ENCODE measurements at regions of chr3 and their contacts with region 1.

Region 1: GRCh38 chr3:44913868-44914468 is 39.6 kb downstream of the TGM4 start:
- DNase-seq: peak; percentile 77
- CTCF ChIP-seq: peak; percentile 89

Region 2: DNA sequence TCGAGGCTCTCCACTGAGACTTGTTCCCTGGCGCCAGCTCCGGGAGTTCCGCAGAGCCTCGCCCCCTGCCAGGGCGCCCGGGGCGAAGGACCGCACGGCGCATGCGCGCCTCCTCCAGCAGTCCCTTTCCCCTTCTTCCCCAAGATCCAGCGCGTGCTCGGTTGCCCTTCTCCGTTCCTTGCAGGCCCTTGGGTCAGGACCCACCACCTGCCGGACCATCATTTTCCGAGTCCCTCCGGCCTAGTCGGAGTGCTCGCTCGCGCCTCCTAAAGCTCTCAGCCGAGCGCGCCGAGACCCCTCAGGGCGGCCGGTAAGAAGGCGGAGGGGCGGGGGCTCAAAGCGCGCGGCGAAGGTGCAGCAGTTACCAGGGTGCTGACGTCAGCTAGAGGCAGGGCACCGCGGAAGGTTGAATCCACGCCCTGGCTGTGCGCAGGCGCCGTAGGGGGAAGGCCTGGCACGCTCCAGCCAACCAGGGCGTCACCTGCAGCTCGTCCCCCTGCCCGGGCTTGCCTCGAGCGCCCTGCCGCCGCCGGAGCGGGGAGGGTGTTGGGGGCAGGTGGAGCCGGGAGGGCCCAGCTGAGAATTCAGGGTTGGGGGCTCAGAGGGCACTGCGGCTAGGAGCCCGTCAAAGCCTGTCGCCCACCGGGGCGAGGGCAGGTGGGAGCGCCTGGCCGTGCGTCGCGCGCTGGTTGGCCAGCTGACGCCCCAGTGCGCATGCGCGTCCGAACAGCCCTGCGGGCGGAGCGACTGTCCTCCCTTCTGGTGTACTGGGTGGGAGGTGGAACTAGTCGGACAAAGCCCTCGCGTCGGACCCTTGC is 575.7 kb before region 1 on chr3 and contains the start of gene TCAIM:
- in situ Hi-C with region 1: loop called (anchors 25 kb)
- DNase-seq: peak; percentile 99
- CTCF ChIP-seq: no peak

Region 3: DNA sequence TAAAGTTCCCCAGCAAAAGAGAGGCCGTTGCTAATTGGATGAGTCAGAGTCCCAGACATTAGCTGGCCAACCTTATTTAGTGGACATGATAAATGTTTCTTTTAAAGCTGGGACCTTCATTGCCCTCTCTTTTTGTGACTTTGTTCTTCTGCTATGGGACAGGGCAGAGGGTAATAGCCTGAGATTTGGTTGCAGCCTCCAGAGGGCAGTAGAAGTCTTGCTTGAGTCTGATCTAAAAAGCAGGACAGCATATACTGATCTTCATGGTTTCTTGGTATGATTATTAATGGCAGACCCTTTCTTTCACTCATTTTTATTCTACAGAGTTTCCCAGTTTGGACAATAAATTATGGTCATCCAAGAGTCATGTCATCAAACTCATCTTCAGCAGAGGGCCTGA is 384.0 kb before region 1 on chr3:
- in situ Hi-C with region 1: loop called (anchors 10 kb)
- DNase-seq: no peak
- CTCF ChIP-seq: peak; percentile 64

Region 4: GRCh38 chr3:44772099-44772442 is 141.9 kb before region 1 on chr3:
- in situ Hi-C with region 1: no loop called
- DNase-seq: no peak
- CTCF ChIP-seq: no peak

Measured in GM13977 (cell line).